WTC11 (cell line): ENCODE measurements at regions of chr3 and their contacts with region 1.

Region 1: DNA sequence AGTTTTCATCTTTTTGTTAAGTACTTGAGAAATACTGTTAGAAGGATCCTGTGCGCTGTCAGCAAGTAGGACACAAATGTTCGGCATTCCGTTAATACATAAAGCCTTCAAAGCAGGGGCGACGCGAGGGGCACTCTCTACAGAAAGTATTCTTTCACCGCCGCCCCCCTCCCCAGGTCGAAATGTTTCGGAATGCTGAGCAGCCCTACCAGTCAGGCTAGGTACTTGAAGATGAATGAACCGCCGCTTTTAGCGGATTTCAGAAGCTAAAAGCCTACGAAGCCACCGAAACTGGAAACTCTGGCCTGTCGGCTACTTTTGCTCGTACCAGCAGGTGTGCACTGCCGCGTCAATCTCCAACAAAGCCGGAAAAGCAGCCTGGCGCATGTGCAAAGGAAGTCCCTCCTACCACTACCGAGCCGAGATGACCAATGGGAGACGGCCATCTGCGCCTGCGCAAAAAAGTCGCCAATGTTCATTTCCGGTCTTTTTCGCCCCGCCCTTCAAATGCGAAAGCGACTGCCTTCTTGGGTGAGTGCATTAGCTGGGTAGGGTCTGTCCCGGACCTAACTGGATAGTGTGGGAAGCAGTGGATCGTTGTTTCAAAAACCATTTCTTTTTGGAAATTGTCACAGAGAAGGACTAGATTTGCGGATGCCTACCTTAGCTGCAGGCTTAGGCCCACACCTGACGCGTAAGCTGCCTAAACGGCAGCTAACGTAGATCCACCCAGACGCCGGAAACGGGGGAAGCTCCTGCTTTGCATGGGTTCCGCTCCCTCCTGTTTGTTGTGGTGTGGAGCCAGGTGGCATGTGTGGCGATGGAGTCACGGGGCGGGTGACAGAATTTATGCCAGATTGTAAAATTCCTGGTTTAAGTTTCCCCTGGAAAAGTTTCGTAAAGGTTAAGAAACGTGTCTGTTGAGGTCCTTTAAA is at the start of gene WDR5B:
- DNase-seq: peak; percentile 98
- ATAC-seq: peak; percentile 88
- H3K4me3 Mint-ChIP-seq: peak within 1 kb of the TSS; percentile 95
- H3K27ac Mint-ChIP-seq: peak within 1 kb of the TSS; percentile 95
- H3K4me1 Mint-ChIP-seq: peaks cover 17% of the 10 kb centered on the region
- H3K27me3 Mint-ChIP-seq: no peaks in the 10 kb centered on the region
- CTCF ChIP-seq: no peak
- total RNA-seq, gene WDR5B: 2.6 to 2.9 TPM (median 2.8 TPM) in 3 replicates

Region 2: DNA sequence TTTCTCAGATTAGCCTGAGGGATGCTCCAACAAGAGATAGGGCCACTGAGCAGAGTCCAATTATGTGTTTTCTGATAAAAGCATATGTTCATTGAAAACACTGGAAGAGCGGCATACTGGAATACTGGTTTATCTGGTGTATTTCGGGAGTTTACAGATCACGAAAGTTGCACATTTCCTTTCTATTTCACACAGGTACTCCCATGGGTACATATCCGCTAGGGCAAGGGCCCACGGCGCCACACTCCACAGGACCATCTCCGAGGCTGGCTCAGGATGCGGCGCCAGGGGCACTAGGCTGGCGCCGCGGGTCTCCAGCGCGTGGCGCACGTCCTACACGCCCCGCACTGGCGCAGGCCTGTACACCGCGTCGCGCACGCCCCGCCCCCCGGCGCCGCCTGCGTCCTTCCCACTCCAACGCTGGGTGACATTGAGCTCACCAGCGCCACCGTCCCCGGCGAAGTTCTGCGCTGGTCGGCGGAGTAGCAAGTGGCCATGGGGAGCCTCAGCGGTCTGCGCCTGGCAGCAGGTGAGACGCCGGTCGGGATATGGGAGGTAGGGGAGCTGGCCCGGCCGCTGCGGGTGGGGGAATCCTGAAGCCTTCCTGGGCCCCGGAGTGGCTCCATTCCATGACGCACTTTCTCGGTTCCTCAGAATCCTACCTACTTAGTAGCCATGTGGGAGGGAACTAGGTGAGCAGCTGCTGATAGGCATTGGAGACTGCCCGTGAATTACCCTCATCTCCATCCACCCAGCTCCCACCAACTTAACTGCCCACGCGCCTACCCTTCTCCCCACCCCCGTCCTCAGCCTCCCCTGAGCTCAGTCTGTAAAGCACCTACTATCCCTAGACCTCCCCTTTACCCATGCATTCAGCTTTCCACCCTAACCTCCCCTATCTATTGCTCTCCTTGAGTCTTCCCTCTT is 32.0 kb before region 1 on chr3 and contains the start of gene FAM162A:
- CTCF ChIA-PET with region 1: interaction called, 13 read pairs
- POLR2A ChIA-PET with region 1: interaction called, 18 read pairs
- DNase-seq: peak; percentile 94
- ATAC-seq: peak; percentile 94
- H3K4me3 Mint-ChIP-seq: peak within 1 kb of the TSS; percentile 90
- H3K27ac Mint-ChIP-seq: peak within 1 kb of the TSS; percentile 98
- H3K4me1 Mint-ChIP-seq: peaks cover 45% of the 10 kb centered on the region
- H3K27me3 Mint-ChIP-seq: no peaks in the 10 kb centered on the region
- CTCF ChIP-seq: no peak
- total RNA-seq, gene FAM162A: 83.9 to 141 TPM (median 128 TPM) in 3 replicates

Region 3: GRCh38 chr3:122392868-122393844 is 22.8 kb before region 1 on chr3:
- CTCF ChIA-PET with region 1: interaction called, 13 read pairs
- POLR2A ChIA-PET with region 1: interaction called, 3 read pairs
- DNase-seq: no peak
- ATAC-seq: no peak; the same call in 1 of the 2 replicates
- H3K4me3 Mint-ChIP-seq: no peak overlapping the region
- H3K27ac Mint-ChIP-seq: no peak overlapping the region
- H3K4me1 Mint-ChIP-seq: peaks cover 19% of the 10 kb centered on the region
- H3K27me3 Mint-ChIP-seq: no peaks in the 10 kb centered on the region
- CTCF ChIP-seq: peak; percentile 50; the same call in 1 of the 2 replicates